Cardiac septum (tissue), 1 donor: ENCODE measurements at regions of chrX and their contacts with region 1.

Region 1: GRCh38 chrX:106791495-106791894 is 11.0 kb upstream of the TBC1D8B start:
- DNase-seq: no peak

Region 2: DNA sequence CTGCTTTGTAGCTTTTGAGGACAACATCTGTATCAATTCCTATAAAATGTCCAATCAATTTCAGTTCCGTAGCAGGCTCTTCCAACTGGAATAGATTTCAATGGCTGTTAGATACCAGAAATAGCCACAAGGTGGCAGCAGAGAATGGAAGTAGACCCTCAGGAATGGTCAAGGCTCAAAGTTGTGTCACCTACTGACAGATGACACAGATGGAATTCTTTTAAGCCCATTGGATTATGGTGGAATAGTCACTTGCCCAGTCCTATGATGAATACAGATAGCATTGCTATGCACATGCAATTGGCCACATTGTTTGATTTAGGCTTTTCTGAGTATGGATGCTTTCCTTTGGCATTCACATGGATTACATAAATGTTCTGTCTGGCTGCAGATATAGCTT is 310.2 kb before region 1 on chrX:
- intact Hi-C with region 1: loop called (anchors 5 kb)
- DNase-seq: no peak

Region 3: GRCh38 chrX:107171369-107172102 is 380.0 kb after region 1 on chrX:
- intact Hi-C with region 1: no loop called
- DNase-seq: no peak